Tibial artery (tissue), 4 donors: ENCODE measurements at regions of chr14 and their contacts with region 1.

Region 1: GRCh38 chr14:68979021-68979782 is at the start of gene ACTN1:
- DNase-seq: peak; percentile 96 to 98
- H3K4me3 ChIP-seq: peak within 1 kb of the TSS; percentile 68 to 93
- H3K27ac ChIP-seq: peak within 1 kb of the TSS; percentile 97 to 100
- H3K4me1 ChIP-seq: peaks cover 0 to 68% (median 55%) of the 10 kb centered on the region in 4 donors
- H3K27me3 ChIP-seq: no peaks in the 10 kb centered on the region
- CTCF ChIP-seq: no peak

Region 2: GRCh38 chr14:68939893-68940613 is 39.1 kb before region 1 on chr14:
- intact Hi-C with region 1: loop called (anchors 5 kb)
- DNase-seq: peak; percentile 85 to 98
- H3K4me3 ChIP-seq: no peak overlapping the region
- H3K27ac ChIP-seq: peak overlapping the region; percentile 97 to 100
- H3K4me1 ChIP-seq: peaks cover 21 to 98% (median 97%) of the 10 kb centered on the region in 4 donors
- H3K27me3 ChIP-seq: no peaks in the 10 kb centered on the region
- CTCF ChIP-seq: peak in 1 of 2 experiments; percentile 11

Region 3: GRCh38 chr14:69038455-69039287 is 59.5 kb after region 1 on chr14:
- intact Hi-C with region 1: loop called (anchors 2 kb)
- DNase-seq: no peak
- H3K4me3 ChIP-seq: no peak overlapping the region
- H3K27ac ChIP-seq: peak overlapping the region; percentile 87 to 91
- H3K4me1 ChIP-seq: peaks cover 4 to 82% (median 47%) of the 10 kb centered on the region in 4 donors
- H3K27me3 ChIP-seq: no peaks in the 10 kb centered on the region
- CTCF ChIP-seq: no peak